CD4-positive, alpha-beta memory T cell (primary cell): ENCODE measurements at regions of chr10 and their contacts with region 1.

Region 1: DNA sequence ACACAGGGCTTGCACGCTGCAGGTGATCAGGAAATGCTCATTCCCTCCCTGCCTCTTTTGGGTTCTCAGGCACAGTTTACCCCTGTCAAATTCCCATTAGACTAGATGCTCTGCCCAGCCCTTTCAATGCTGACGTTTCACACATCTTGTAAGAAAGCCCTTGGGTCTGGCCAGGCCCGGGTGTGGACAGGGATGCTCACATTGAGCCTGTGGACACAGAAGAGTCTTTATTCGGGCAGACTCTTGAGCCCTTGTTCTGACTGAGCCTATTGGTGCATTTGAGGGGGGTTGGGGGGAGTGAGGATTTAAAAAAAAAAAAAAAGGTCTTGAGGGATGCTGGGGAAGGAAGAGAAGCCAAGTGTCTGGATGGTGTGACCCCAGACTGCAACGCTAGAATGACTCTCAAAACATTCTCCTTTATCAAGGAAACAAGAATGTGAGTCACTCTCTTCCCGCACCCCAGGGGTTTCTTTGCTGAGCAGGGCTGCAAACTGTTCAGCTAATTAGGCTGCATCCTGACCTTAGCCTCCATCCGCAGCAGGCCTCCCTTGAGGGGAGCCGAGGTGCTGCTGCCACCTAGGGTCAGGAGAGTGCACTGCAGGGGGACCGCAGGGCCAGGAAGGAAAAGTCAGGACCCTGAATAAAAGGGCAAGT is 53.6 kb upstream of the TMEM72 start:
- DNase-seq: peak in 4 of 5 donors; percentile 20 to 48 (median 34)
- H3K4me3 ChIP-seq: no peak overlapping the region
- H3K4me3 Mint-ChIP-seq: no peak overlapping the region
- H3K27ac ChIP-seq: no peak overlapping the region
- H3K27ac Mint-ChIP-seq: no peak overlapping the region
- H3K4me1 ChIP-seq: no peaks in the 10 kb centered on the region
- H3K4me1 Mint-ChIP-seq: no peaks in the 10 kb centered on the region
- H3K27me3 ChIP-seq: no peaks in the 10 kb centered on the region
- H3K27me3 Mint-ChIP-seq: peaks cover 0 to 3% of the 10 kb centered on the region in 2 donors

Region 2: GRCh38 chr10:43671656-43672531 is 1185.6 kb before region 1 on chr10:
- CTCF ChIA-PET with region 1: interaction called, 27 read pairs
- POLR2A ChIA-PET with region 1: no interaction called
- intact Hi-C with region 1: no loop called
- DNase-seq: peak in 4 of 5 donors; percentile 49 to 65 (median 54)
- H3K4me3 ChIP-seq: no peak overlapping the region
- H3K4me3 Mint-ChIP-seq: no peak overlapping the region
- H3K27ac ChIP-seq: no peak overlapping the region
- H3K27ac Mint-ChIP-seq: no peak overlapping the region
- H3K4me1 ChIP-seq: no peaks in the 10 kb centered on the region
- H3K4me1 Mint-ChIP-seq: peaks cover 0 to 7% (median 2%) of the 10 kb centered on the region in 4 donors
- H3K27me3 ChIP-seq: peaks cover 10% of the 10 kb centered on the region
- H3K27me3 Mint-ChIP-seq: peaks cover 27 to 32% of the 10 kb centered on the region in 2 donors

Region 3: GRCh38 chr10:44300666-44301649 is 556.5 kb before region 1 on chr10:
- CTCF ChIA-PET with region 1: no interaction called
- POLR2A ChIA-PET with region 1: no interaction called
- intact Hi-C with region 1: loop called (anchors 10 kb)
- DNase-seq: no peak
- H3K4me3 ChIP-seq: no peak overlapping the region
- H3K4me3 Mint-ChIP-seq: no peak overlapping the region
- H3K27ac ChIP-seq: no peak overlapping the region
- H3K27ac Mint-ChIP-seq: no peak overlapping the region
- H3K4me1 ChIP-seq: no peaks in the 10 kb centered on the region
- H3K4me1 Mint-ChIP-seq: no peaks in the 10 kb centered on the region
- H3K27me3 ChIP-seq: no peaks in the 10 kb centered on the region
- H3K27me3 Mint-ChIP-seq: peaks cover 0 to 5% of the 10 kb centered on the region in 2 donors

Region 4: GRCh38 chr10:44845361-44846175 is 11.9 kb before region 1 on chr10:
- CTCF ChIA-PET with region 1: interaction called, 24 read pairs
- POLR2A ChIA-PET with region 1: no interaction called
- intact Hi-C with region 1: no loop called
- DNase-seq: no peak
- H3K4me3 ChIP-seq: no peak overlapping the region
- H3K4me3 Mint-ChIP-seq: no peak overlapping the region
- H3K27ac ChIP-seq: no peak overlapping the region
- H3K27ac Mint-ChIP-seq: no peak overlapping the region
- H3K4me1 ChIP-seq: no peaks in the 10 kb centered on the region
- H3K4me1 Mint-ChIP-seq: no peaks in the 10 kb centered on the region
- H3K27me3 ChIP-seq: no peaks in the 10 kb centered on the region
- H3K27me3 Mint-ChIP-seq: peaks cover 9 to 11% of the 10 kb centered on the region in 2 donors

Region 5: DNA sequence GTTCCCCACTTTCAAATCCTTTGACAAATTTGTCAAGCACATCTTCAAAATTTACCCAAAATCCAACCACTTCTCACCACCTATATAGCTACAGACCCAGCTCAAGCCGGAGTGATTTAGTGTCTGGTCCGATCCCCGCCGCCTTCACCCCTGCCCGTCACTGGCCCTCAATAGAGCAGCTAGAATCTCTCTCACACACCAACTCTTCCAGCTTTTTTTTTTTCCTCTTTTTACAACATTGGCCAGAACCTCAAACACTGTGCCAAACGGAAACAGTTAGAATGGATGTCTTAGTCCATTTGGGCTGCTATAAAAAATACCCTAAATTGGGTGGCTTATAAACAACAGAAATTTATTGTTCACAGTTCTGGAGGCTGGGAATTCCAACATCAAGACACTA is 12.5 kb after region 1 on chr10:
- CTCF ChIA-PET with region 1: interaction called, 70 read pairs
- POLR2A ChIA-PET with region 1: no interaction called
- intact Hi-C with region 1: no loop called
- DNase-seq: no peak
- H3K4me3 ChIP-seq: no peak overlapping the region
- H3K4me3 Mint-ChIP-seq: no peak overlapping the region
- H3K27ac ChIP-seq: no peak overlapping the region
- H3K27ac Mint-ChIP-seq: no peak overlapping the region
- H3K4me1 ChIP-seq: peaks cover 2% of the 10 kb centered on the region
- H3K4me1 Mint-ChIP-seq: peaks cover under 1 to 2% (median under 1%) of the 10 kb centered on the region in 4 donors
- H3K27me3 ChIP-seq: peaks cover 8% of the 10 kb centered on the region
- H3K27me3 Mint-ChIP-seq: peaks cover 20 to 29% of the 10 kb centered on the region in 2 donors